Heart right ventricle (tissue), 16 donors: ENCODE measurements at regions of chr1 and their contacts with region 1.

Region 1: GRCh38 chr1:29202584-29203340 is 21.1 kb upstream of the SRSF4 start:
- DNase-seq: peak; percentile 94 to 96
- ATAC-seq: peak; percentile 86 to 96 (median 95)
- H3K4me3 ChIP-seq: no peak overlapping the region
- H3K27ac ChIP-seq: peak overlapping the region in 9 of 10 donors; percentile 6 to 83 (median 77)
- H3K4me1 ChIP-seq: peaks cover 3 to 19% (median 12%) of the 10 kb centered on the region in 9 donors
- H3K27me3 ChIP-seq: no peaks in the 10 kb centered on the region
- CTCF ChIP-seq: peak; percentile 95 to 99 (median 97)

Region 2: DNA sequence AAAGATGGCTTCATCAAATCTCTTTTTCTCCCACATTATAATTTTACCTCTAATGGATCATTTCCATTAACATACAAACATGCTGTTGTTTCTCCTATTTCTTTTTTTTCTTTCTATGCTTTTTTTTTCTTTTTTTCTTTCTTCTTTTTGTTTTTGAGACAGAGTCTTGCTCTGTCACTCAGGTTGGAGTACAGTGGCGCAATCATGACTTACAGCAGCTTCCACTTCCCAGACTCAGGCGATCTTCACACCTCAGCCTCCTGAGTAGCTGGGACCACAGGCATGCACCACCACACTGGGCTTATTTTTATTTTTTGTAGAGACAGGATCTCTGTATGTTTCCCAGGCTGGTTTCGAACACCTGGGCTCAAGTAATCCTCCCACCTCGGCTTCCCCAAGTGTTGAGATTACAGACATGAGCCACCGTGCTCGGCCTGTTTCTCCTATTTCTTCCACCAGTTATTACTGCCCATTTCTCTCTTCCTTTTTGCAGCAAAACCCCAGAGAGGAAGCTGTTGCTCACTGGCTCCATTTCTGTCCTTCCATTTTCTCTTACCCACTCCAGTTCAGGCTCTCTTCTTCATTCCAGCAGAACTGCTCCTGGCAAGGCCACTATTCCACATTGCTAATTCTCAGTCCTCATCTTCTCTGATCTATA is 422.9 kb before region 1 on chr1:
- intact Hi-C with region 1: loop called in 7 of 10 experiments (anchors 5 to 10 kb)
- DNase-seq: no peak
- ATAC-seq: no peak
- H3K4me3 ChIP-seq: no peak overlapping the region
- H3K27ac ChIP-seq: no peak overlapping the region
- H3K4me1 ChIP-seq: peaks cover 0 to 13% (median 7%) of the 10 kb centered on the region in 9 donors
- H3K27me3 ChIP-seq: no peaks in the 10 kb centered on the region
- CTCF ChIP-seq: no peak

Region 3: GRCh38 chr1:28886731-28887418 is 315.9 kb before region 1 on chr1:
- intact Hi-C with region 1: loop called (anchors 1 to 5 kb)
- DNase-seq: peak; percentile 80 to 86
- ATAC-seq: peak; percentile 79 to 89 (median 84)
- H3K4me3 ChIP-seq: peak overlapping the region; percentile 53 to 99 (median 88)
- H3K27ac ChIP-seq: peak overlapping the region; percentile 34 to 93 (median 86)
- H3K4me1 ChIP-seq: peaks cover 0 to 45% (median 16%) of the 10 kb centered on the region in 9 donors
- H3K27me3 ChIP-seq: peaks cover 0 to 6% (median 0%) of the 10 kb centered on the region in 7 donors
- CTCF ChIP-seq: no peak

Region 4: DNA sequence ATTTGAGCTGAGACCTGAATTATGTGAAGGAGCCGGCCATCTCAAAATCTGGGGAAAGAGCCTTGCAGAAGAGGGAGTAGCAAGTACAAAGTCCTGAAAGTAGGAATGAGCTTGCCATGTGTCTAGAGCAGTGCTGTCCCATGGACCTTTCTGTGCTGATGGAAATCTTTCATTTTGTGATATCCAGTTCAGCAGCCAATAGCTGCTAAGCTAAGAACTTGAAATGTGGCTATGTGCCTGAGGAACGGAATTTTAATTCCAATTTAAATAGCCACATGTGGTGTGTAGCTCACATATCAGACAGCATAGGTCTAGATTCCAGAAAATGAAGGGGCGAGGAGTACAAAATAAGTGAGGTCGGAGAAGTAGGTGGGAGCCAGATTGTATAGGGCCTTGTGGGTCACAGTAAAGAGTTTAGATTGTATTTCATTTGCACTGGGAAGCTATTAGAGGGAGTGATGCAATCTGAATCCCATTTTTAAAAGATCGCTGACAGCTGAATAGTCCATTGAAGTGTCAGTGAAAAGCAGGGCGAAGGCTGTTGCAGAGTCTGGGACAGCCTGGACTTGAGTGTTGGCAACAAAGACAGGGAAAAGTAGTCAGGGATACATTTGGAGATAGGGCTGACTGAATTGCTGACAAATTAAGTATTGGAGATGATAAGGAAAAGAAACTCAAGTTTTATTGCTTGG is 159.3 kb before region 1 on chr1:
- intact Hi-C with region 1: loop called in 5 of 10 experiments (anchors 5 to 10 kb)
- DNase-seq: peak in 1 of 2 donors; percentile 28
- ATAC-seq: peak; percentile 81 to 97 (median 94)
- H3K4me3 ChIP-seq: peak overlapping the region in 1 of 10 donors; percentile 7
- H3K27ac ChIP-seq: peak overlapping the region in 6 of 10 donors; percentile 7 to 66 (median 44)
- H3K4me1 ChIP-seq: peaks cover 0 to 12% (median 4%) of the 10 kb centered on the region in 9 donors
- H3K27me3 ChIP-seq: no peaks in the 10 kb centered on the region
- CTCF ChIP-seq: no peak

Region 5: GRCh38 chr1:29181413-29182225 is 21.1 kb before region 1 on chr1 and contains the start of gene SRSF4:
- intact Hi-C with region 1: loop called in 1 of 10 experiments (anchors 2 kb)
- DNase-seq: peak; percentile 99 to 100
- ATAC-seq: peak; percentile 96 to 97 (median 96)
- H3K4me3 ChIP-seq: peak within 1 kb of the TSS; percentile 83 to 99 (median 91)
- H3K27ac ChIP-seq: peak within 1 kb of the TSS; percentile 99 to 100 (median 100)
- H3K4me1 ChIP-seq: peaks cover 2 to 54% (median 43%) of the 10 kb centered on the region in 9 donors
- H3K27me3 ChIP-seq: no peaks in the 10 kb centered on the region
- CTCF ChIP-seq: peak; percentile 35 to 93 (median 84)
- total RNA-seq, gene SRSF4: 40.8 to 67.8 (median 49.0) TPM

Region 6: DNA sequence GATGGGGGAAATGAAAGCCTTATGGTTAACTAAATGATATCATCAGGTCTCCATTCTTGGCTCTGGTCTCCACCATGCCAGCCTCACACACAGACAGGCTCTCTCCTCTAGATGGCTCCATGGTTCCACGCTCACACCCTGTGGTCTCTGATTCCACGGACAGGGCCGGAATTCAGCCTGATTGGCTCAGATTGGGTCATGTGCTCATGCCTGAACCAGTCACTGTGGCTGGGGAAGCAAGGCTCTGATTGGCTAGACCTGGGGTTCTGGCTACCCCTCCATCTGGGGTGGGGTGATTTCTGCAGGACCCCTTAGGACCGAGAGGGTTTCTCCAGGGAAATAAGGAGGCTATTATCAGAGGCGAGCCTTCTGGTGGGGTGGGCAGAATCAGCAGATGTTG is 310.6 kb after region 1 on chr1:
- intact Hi-C with region 1: no loop called
- DNase-seq: peak in 1 of 2 donors; percentile 23
- ATAC-seq: peak; percentile 52 to 93 (median 72)
- H3K4me3 ChIP-seq: no peak overlapping the region
- H3K27ac ChIP-seq: no peak overlapping the region
- H3K4me1 ChIP-seq: no peaks in the 10 kb centered on the region
- H3K27me3 ChIP-seq: peaks cover 0 to 40% (median 4%) of the 10 kb centered on the region in 7 donors
- CTCF ChIP-seq: peak; percentile 28 to 61 (median 52)